Heart right ventricle (tissue), 16 donors: ENCODE measurements at regions of chr3 and their contacts with region 1.

Region 1: GRCh38 chr3:99686955-99687612 is 48.7 kb downstream of the COL8A1 start:
- DNase-seq: peak; percentile 43 to 55
- ATAC-seq: peak in 3 of 8 donors; percentile 46 to 54 (median 48)
- H3K4me3 ChIP-seq: no peak overlapping the region
- H3K27ac ChIP-seq: peak overlapping the region in 1 of 10 donors; percentile 23
- H3K4me1 ChIP-seq: peaks cover 0 to 26% (median 0%) of the 10 kb centered on the region in 9 donors
- H3K27me3 ChIP-seq: peaks cover 0 to 3% (median 0%) of the 10 kb centered on the region in 7 donors
- CTCF ChIP-seq: peak; percentile 43 to 76 (median 67)

Region 2: DNA sequence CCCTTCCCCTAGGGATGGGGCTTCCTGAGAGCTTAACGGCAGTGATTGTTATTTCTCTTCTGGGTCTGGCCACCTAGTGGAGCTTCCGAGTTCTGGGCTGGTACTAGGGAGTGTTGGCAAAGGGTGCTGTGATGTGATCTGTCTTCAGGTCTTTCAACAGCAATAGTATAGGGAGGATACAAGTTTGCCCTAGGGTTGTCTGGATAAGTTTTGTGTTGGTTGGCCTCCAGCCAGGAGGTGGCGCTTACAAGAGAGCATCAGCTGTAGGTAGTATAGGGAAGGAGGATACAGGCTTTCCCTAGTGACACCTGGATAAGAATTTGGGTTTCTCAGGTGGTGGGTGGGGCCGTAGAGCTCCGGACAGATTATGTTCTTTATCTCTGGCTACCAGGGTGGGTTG is 1074.5 kb before region 1 on chr3:
- intact Hi-C with region 1: no loop called
- DNase-seq: peak in 1 of 2 donors; percentile 12
- ATAC-seq: peak in 1 of 8 donors; percentile 20
- H3K4me3 ChIP-seq: no peak overlapping the region
- H3K27ac ChIP-seq: peak overlapping the region in 1 of 10 donors; percentile 69
- H3K4me1 ChIP-seq: no peaks in the 10 kb centered on the region
- H3K27me3 ChIP-seq: no peaks in the 10 kb centered on the region
- CTCF ChIP-seq: peak in 1 of 9 donors; percentile 7

Region 3: GRCh38 chr3:99645277-99646106 is 41.6 kb before region 1 on chr3:
- intact Hi-C with region 1: loop called in 4 of 10 experiments (anchors 1 to 5 kb)
- DNase-seq: no peak
- ATAC-seq: peak in 5 of 8 donors; percentile 4 to 31 (median 23)
- H3K4me3 ChIP-seq: no peak overlapping the region
- H3K27ac ChIP-seq: peak overlapping the region in 9 of 10 donors; percentile 3 to 72 (median 45)
- H3K4me1 ChIP-seq: peaks cover 0 to 29% (median 7%) of the 10 kb centered on the region in 9 donors
- H3K27me3 ChIP-seq: no peaks in the 10 kb centered on the region
- CTCF ChIP-seq: peak in 8 of 9 donors; percentile 38 to 68 (median 58)